ENCODE measurements at regions of chrX and their contacts with region 1.

Region 1: GRCh38 chrX:12974796-12975669 is at the start of gene TMSB4X:
- DNase-seq: peak; percentile 89
- H3K4me3 ChIP-seq: peak within 1 kb of the TSS; percentile 55 to 86 (median 64)
- H3K27ac ChIP-seq: peak within 1 kb of the TSS; percentile 90 to 99 (median 94)
- H3K4me1 ChIP-seq: peaks cover 0 to 10% (median 3%) of the 10 kb centered on the region in 4 donors
- H3K27me3 ChIP-seq: no peaks in the 10 kb centered on the region
- CTCF ChIP-seq: no peak
- EP300 ChIP-seq: no peak
- POLR2A ChIP-seq: peak; percentile 99
- total RNA-seq, gene TMSB4X: 680 to 4,578 (median 2,996) TPM

Region 2: DNA sequence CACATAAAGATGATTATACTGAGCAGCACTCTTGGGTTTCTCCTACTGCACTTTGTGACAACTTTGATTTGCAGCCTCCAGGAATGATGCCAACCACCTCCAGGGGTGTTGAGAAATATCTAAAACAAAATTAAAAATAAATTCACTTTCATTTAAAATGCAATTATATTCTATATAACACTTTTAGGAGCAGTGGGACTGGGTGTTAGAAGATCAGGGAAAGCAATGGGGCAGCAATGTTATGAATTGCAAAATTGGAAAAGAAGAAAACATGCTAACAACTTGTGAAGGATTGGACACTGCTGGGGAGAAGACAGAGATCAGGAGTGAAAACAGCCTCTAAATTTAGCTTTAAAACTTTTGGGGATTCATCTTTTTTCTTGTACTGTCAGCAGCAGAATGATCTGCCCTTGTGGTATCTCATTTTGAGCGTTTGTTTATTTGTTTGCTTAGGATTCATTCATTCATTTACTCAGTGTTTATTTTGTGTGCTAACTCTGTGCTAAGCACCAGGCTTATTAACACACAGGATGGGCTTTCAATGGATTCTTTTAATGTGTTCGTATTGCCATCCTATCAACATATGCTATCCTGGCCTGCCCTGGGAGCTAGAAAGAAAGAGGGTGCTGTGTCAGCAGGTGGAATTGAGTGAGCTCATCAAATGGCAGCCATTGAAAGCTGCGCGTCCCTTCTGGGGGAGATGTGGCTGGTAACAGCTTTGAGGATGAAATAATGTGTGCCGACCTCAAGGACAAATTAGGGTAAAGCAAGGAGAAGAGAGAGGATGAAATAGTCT is 740.3 kb before region 1 on chrX:
- in situ Hi-C with region 1: no loop called
- intact Hi-C with region 1: no loop called
- DNase-seq: no peak
- H3K4me3 ChIP-seq: no peak overlapping the region
- H3K27ac ChIP-seq: no peak overlapping the region
- H3K4me1 ChIP-seq: no peaks in the 10 kb centered on the region
- H3K27me3 ChIP-seq: no peaks in the 10 kb centered on the region
- CTCF ChIP-seq: no peak
- EP300 ChIP-seq: no peak
- POLR2A ChIP-seq: no peak

Region 3: DNA sequence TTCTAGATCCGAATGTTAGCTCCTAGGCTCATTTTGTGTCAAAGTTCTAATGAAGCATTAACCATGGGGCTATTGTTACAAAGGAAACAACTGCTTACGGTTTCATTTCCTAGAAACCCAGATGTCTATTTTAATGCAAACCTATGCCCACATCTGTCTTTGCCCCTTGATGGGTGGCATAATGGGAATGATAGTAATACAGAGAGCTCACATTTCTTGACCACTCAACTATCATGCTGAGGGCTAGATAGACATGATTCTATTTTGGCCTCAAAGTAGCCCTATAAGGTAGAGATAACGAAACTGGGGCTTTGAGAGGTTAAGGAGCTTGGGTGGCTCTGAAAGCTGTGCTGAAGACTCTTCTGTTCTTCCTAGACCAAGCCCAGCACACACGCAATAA is 106.3 kb before region 1 on chrX:
- in situ Hi-C with region 1: no loop called
- intact Hi-C with region 1: loop called (anchors 5 kb)
- DNase-seq: no peak
- H3K4me3 ChIP-seq: no peak overlapping the region
- H3K27ac ChIP-seq: peak overlapping the region in 1 of 4 donors; percentile 8
- H3K4me1 ChIP-seq: no peaks in the 10 kb centered on the region
- H3K27me3 ChIP-seq: no peaks in the 10 kb centered on the region
- CTCF ChIP-seq: no peak
- EP300 ChIP-seq: no peak
- POLR2A ChIP-seq: no peak

Region 4: DNA sequence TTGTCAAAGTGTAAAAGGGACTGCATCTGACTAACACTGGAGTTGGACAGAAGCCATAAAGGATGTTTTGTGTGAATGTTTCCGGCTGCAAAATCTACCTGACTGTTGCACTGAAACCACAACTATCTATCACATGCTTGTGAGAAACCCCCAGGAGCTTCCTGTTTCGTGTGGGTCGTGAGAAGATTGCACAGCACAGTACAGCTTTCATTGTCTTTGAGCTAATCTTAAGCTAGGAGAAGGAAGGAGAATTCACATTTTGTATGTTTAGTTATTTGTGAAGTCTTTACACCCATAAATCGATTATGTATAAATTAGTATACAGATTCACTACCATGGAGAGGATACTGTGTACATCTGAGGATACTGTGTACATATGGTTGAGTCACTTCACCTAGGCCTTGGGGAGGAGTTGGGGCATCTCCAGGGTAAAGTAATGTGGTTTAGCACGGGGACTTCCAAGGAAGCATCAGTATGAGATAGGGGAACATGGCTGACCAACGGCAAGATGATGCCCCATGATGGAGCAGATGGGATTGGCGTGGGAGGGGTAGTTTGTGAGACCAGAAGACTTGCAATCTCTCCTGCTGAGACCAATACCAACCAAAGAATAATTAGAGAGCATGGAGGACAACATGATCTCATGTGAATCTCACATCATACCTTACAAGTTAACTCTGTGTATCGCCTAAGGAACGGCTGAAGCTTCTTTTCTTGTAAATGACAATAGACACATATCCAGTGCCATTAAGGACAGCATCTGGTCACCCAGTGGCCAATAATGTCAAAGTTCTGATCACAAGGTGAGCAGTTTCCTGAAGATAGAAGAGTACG is 112.5 kb after region 1 on chrX:
- in situ Hi-C with region 1: loop called in 2 of 4 experiments (anchors 25 kb)
- intact Hi-C with region 1: no loop called
- DNase-seq: peak; percentile 45
- H3K4me3 ChIP-seq: no peak overlapping the region
- H3K27ac ChIP-seq: peak overlapping the region; percentile 12 to 50 (median 28)
- H3K4me1 ChIP-seq: peaks cover 0 to 19% (median 0%) of the 10 kb centered on the region in 4 donors
- H3K27me3 ChIP-seq: no peaks in the 10 kb centered on the region
- CTCF ChIP-seq: no peak
- EP300 ChIP-seq: no peak
- POLR2A ChIP-seq: no peak

Region 5: GRCh38 chrX:13254076-13254785 is 279.2 kb after region 1 on chrX:
- in situ Hi-C with region 1: loop called in 1 of 4 experiments (anchors 25 kb)
- intact Hi-C with region 1: no loop called
- DNase-seq: peak; percentile 41
- H3K4me3 ChIP-seq: no peak overlapping the region
- H3K27ac ChIP-seq: no peak overlapping the region
- H3K4me1 ChIP-seq: no peaks in the 10 kb centered on the region
- H3K27me3 ChIP-seq: no peaks in the 10 kb centered on the region
- CTCF ChIP-seq: no peak
- EP300 ChIP-seq: no peak
- POLR2A ChIP-seq: no peak

Region 6: DNA sequence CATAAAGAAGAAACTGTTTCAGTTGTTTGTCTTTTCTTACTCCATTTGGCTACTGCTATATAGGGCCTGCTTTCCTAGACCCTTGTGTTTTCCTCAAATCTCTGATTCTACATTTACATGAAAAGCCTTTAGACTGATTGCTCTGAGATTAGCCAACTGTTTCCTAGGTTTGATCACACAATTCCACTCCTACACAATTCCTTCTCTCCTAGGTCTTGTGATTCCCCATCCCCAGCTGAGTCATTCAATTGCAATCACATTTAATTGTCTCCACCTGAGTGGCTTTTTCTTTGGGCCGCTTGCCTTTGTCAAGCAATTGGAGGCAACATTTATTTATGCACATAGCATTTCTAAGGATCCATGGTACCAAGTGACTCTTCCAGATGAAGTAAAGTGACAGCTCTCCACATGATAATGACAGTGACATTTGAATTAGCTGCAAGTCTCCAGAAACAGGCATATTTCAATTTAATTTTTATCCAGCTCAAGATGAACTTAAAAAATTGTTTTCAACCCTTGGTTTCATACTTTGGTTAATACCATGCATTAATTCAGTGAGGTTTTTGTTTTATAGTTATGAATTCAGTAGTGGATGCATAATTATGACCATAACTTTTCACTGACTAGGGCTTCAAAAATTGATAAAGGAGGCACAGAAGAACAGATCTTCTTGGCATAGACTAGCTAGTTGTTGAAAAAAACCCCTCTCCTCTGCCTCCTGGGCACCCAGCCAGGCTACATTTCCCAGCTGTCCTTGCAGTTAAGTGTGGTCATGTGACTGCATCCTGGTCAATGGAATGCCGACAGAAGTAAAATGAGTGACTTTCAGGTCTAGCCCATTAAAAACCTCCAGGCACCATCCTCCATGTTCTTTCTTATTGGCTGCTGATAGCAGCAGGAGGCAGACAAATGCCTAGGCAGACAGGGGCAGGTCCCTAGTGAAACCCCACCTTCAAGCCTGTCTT is 309.2 kb after region 1 on chrX:
- in situ Hi-C with region 1: no loop called
- intact Hi-C with region 1: no loop called
- DNase-seq: no peak
- H3K4me3 ChIP-seq: no peak overlapping the region
- H3K27ac ChIP-seq: no peak overlapping the region
- H3K4me1 ChIP-seq: no peaks in the 10 kb centered on the region
- H3K27me3 ChIP-seq: no peaks in the 10 kb centered on the region
- CTCF ChIP-seq: no peak
- EP300 ChIP-seq: no peak
- POLR2A ChIP-seq: no peak

Region 7: GRCh38 chrX:13653022-13653693 is 678.1 kb after region 1 on chrX and contains the start of gene TCEANC:
- in situ Hi-C with region 1: loop called in 2 of 4 experiments (anchors 25 kb)
- intact Hi-C with region 1: no loop called
- DNase-seq: peak; percentile 97
- H3K4me3 ChIP-seq: peak within 1 kb of the TSS; percentile 41 to 66 (median 54)
- H3K27ac ChIP-seq: peak within 1 kb of the TSS; percentile 86 to 98 (median 94)
- H3K4me1 ChIP-seq: peaks cover 0 to 13% (median 7%) of the 10 kb centered on the region in 4 donors
- H3K27me3 ChIP-seq: no peaks in the 10 kb centered on the region
- CTCF ChIP-seq: no peak
- EP300 ChIP-seq: no peak
- POLR2A ChIP-seq: peak; percentile 77
- total RNA-seq, gene TCEANC: 0.20 to 9.1 (median 3.7) TPM

Measured in transverse colon (tissue), 4 donors.